Colonic mucosa (tissue), 4 donors: ENCODE measurements at regions of chr15 and their contacts with region 1.

Region 1: GRCh38 chr15:41603941-41604911 is 45.2 kb downstream of the TYRO3 start:
- DNase-seq: peak; percentile 57
- H3K4me3 ChIP-seq: peak overlapping the region; percentile 10
- H3K27ac ChIP-seq: no peak overlapping the region
- H3K4me1 ChIP-seq: peaks cover 7% of the 10 kb centered on the region
- H3K27me3 ChIP-seq: no peaks in the 10 kb centered on the region
- CTCF ChIP-seq: peak; percentile 62

Region 2: GRCh38 chr15:40511472-40512133 is 1092.6 kb before region 1 on chr15:
- intact Hi-C with region 1: no loop called
- DNase-seq: peak; percentile 88
- H3K4me3 ChIP-seq: peak overlapping the region; percentile 60
- H3K27ac ChIP-seq: no peak overlapping the region
- H3K4me1 ChIP-seq: no peaks in the 10 kb centered on the region
- H3K27me3 ChIP-seq: no peaks in the 10 kb centered on the region
- CTCF ChIP-seq: no peak

Region 3: DNA sequence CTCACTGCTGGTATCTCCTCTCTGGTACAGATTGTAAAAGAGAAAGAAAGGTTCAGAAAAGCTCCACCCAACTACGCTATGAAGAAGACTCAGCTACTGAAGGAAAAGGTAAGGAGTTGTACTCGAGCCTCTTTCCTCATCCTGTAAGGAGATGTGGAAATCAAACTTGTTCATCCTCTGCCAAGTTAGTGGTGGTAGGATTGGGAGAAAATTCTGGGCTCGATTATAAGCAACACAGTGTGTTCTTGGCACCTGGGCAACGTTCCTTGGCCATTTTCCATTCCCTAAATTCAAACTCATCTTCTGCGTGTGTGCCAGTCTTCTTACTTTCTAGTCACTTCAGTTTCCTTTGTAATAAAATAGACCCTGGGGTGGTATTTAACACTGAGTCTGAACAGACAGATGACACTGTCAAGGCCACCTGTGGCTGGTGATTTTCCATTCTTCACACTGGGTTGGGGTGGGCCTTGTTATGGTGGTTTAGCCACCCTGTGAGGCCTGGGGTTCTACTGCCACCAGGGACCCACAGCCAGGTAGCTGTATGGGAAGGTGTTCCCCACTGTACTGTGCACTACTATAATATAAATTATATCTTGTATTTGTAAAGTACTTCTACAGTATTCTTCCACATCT is 127.7 kb before region 1 on chr15:
- intact Hi-C with region 1: no loop called
- DNase-seq: no peak
- H3K4me3 ChIP-seq: no peak overlapping the region
- H3K27ac ChIP-seq: no peak overlapping the region
- H3K4me1 ChIP-seq: peaks cover 2% of the 10 kb centered on the region
- H3K27me3 ChIP-seq: no peaks in the 10 kb centered on the region
- CTCF ChIP-seq: no peak

Region 4: DNA sequence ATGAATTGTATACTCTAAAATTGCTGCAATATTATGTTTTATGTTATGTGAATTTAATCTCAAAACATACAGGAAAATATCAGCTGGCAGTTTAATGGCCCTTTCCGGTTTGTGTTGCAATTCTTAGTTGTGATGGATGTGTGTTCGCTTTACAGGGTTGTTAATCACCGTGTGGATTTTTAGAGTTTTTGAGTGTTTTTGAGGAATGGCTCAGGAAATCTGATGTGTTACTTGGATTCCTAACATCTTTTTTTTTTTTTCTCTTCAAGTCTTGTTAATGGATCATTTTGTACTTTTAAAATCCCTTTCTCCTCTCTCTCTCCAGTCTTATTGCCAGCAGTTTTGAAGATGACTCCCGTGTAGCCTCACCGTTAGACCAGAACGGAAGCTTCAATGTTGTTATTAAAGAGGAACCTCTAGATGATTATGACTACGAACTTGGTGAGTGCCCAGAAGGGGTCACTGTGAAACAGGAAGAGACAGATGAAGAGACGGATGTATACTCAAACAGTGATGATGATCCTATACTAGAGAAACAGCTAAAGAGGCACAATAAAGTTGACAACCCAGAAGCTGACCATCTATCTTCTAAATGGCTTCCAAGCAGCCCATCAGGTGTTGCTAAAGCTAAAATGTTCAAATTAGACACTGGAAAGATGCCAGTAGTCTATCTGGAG is 91.7 kb after region 1 on chr15:
- intact Hi-C with region 1: no loop called
- DNase-seq: no peak
- H3K4me3 ChIP-seq: no peak overlapping the region
- H3K27ac ChIP-seq: no peak overlapping the region
- H3K4me1 ChIP-seq: no peaks in the 10 kb centered on the region
- H3K27me3 ChIP-seq: no peaks in the 10 kb centered on the region
- CTCF ChIP-seq: no peak

Region 5: GRCh38 chr15:41734079-41734478 is 129.9 kb after region 1 on chr15:
- intact Hi-C with region 1: no loop called
- DNase-seq: no peak
- H3K4me3 ChIP-seq: no peak overlapping the region
- H3K27ac ChIP-seq: no peak overlapping the region
- H3K4me1 ChIP-seq: no peaks in the 10 kb centered on the region
- H3K27me3 ChIP-seq: no peaks in the 10 kb centered on the region
- CTCF ChIP-seq: no peak

Region 6: DNA sequence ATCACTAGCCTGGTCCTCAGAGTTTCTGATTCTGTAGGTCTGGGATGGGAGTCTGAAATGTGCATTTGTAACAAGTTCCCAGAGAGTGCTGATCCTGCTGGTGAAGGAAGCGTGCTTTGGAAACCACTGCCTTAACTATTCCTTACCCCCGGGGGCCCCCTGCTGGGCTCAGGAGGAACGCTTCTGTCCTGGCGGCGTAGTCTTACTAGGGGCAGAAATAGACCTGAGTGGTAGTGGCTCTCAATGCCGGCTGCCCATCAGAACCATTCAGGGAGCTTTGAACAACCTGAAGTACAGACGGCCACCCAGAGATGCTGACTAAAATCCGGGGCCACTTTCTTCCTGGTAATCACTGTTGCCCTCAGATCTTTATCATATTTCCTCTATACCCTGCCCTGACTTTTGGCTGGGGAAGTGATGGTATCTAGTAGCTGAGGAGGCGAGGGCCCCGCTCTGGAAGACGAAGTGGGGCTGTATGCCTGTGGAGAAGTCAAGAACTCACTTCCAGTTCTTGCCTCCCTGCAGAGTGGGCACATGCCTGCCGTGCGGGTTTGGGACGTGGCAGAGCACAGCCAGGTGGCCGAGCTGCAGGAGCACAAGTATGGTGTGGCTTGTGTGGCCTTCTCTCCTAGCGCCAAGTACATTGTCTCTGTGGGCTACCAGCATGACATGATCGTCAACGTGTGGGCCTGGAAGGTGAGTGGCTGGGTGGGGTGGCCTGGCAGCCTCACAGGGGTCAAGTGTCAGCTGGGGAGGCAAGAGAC is 207.4 kb after region 1 on chr15:
- intact Hi-C with region 1: loop called (anchors 5 kb)
- DNase-seq: peak; percentile 87
- H3K4me3 ChIP-seq: no peak overlapping the region
- H3K27ac ChIP-seq: no peak overlapping the region
- H3K4me1 ChIP-seq: no peaks in the 10 kb centered on the region
- H3K27me3 ChIP-seq: no peaks in the 10 kb centered on the region
- CTCF ChIP-seq: peak; percentile 80